Activated B cell treated with CpG ODN at 0.5 μM for 24 hours (primary cell): ENCODE measurements at regions of chr12 and their contacts with region 1.

Region 1: DNA sequence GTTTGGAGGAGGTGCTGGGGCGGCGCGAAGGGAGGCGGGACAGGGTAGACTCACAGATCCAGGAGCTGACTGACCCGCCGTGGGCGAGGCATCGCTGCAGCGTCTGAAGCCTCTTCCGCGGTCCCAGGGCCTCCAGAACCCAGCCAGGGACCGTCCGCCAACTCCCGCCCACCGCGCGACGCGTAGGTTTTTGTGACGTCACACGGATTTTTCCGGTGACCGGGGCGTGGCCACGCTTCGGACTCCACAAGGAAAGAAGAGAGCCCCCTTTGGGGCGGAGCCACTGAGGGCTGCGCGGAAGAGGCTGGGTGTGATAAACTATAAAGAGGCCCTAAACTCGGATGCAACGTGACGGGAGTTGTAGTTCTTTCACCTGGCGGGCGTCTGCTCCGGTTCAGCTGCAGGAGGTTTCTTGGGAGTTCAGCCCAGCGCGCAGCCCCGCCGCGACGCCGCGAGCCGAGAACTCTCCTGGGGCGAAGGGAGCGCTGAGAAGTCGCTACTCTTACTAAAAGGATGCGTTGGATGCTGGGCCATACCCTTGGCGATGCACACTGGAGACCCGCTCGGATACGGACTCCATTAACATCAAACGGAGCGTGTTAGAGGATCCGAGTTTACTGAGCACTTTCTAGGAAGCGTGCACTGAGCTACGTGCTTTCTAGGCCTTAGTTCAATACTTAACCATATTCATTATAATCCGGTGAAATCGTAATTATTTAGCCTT is at the start of gene AMN1:
- DNase-seq: peak; percentile 100
- ATAC-seq: peak; percentile 90
- H3K4me3 Mint-ChIP-seq: peak within 1 kb of the TSS; percentile 92
- H3K27ac Mint-ChIP-seq: peak within 1 kb of the TSS; percentile 98
- H3K4me1 Mint-ChIP-seq: peaks cover 74% of the 10 kb centered on the region
- H3K27me3 Mint-ChIP-seq: no peaks in the 10 kb centered on the region
- CTCF ChIP-seq: no peak
- total RNA-seq, gene AMN1: 13.7 and 15.5 TPM in 2 replicates

Region 2: GRCh38 chr12:31589904-31590641 is 139.0 kb before region 1 on chr12:
- CTCF ChIA-PET with region 1: no interaction called
- POLR2A ChIA-PET with region 1: no interaction called
- intact Hi-C with region 1: loop called (anchors 10 kb)
- DNase-seq: peak; percentile 75
- ATAC-seq: peak; percentile 70
- H3K4me3 Mint-ChIP-seq: peak overlapping the region; percentile 96
- H3K27ac Mint-ChIP-seq: peak overlapping the region; percentile 94
- H3K4me1 Mint-ChIP-seq: peaks cover 60% of the 10 kb centered on the region
- H3K27me3 Mint-ChIP-seq: no peaks in the 10 kb centered on the region
- CTCF ChIP-seq: no peak

Region 3: GRCh38 chr12:31768046-31768445 is 39.0 kb after region 1 on chr12:
- CTCF ChIA-PET with region 1: no interaction called
- POLR2A ChIA-PET with region 1: interaction called, 13 read pairs
- intact Hi-C with region 1: no loop called
- DNase-seq: no peak
- ATAC-seq: no peak
- H3K4me3 Mint-ChIP-seq: no peak overlapping the region
- H3K27ac Mint-ChIP-seq: peak overlapping the region; percentile 35
- H3K4me1 Mint-ChIP-seq: peaks cover 30% of the 10 kb centered on the region
- H3K27me3 Mint-ChIP-seq: no peaks in the 10 kb centered on the region
- CTCF ChIP-seq: no peak

Region 4: DNA sequence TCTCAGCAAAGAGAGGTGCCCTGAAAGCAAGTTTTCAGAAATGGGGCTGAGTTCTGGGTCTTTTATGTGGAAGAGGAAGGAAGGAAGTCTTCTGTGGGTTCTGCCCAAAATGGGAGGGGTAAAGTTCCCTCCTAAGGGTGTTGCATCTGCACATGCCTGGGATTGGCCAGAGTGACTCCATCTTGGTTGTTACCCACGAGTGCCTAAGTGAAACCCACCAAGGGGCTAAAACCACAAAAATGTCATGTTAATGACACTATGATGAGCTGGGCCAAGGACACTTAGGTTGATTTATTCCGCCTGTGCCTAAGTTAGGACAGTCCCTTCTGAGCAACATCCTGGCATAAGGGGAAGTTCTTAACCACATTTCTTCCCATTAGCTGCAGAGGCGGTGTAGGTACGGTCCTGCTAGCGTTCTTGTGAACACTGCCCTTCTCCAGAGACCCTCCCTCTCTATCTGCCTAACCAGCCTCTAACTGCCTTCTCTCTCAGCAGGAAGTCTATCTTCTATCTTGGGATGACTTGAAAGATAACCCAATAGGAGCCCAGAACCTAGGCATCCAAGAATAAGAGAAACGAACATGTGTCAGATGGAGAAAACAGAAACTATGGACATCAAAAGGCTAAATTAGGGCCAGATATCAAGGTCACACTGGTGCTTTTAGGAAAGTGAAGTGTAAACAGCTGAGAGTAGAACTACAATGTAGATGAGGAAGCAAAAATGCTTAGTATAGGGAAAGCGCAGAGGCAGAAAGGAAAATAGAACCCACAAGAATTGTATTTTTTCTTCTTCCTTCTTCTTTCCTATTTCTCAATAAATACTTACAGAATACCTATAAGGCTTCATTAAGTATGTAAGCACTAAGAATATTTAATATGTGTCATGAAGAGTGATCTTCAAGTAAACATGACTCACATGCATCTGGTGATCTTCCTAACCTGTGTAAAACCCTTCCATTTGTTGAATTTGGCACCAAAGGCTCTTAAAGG is 104.0 kb after region 1 on chr12:
- CTCF ChIA-PET with region 1: interaction called, 3 read pairs
- POLR2A ChIA-PET with region 1: interaction called, 24 read pairs
- intact Hi-C with region 1: loop called (anchors 1 kb)
- DNase-seq: peak; percentile 36
- ATAC-seq: peak; percentile 84
- H3K4me3 Mint-ChIP-seq: peak overlapping the region; percentile 59
- H3K27ac Mint-ChIP-seq: peak overlapping the region; percentile 94
- H3K4me1 Mint-ChIP-seq: peaks cover 76% of the 10 kb centered on the region
- H3K27me3 Mint-ChIP-seq: no peaks in the 10 kb centered on the region
- CTCF ChIP-seq: no peak

Region 5: GRCh38 chr12:31896514-31897039 is 167.5 kb after region 1 on chr12:
- CTCF ChIA-PET with region 1: no interaction called
- POLR2A ChIA-PET with region 1: interaction called, 45 read pairs
- intact Hi-C with region 1: loop called (anchors 1 kb)
- DNase-seq: peak; percentile 58
- ATAC-seq: peak; percentile 93
- H3K4me3 Mint-ChIP-seq: peak overlapping the region; percentile 73
- H3K27ac Mint-ChIP-seq: peak overlapping the region; percentile 96
- H3K4me1 Mint-ChIP-seq: peaks cover 69% of the 10 kb centered on the region
- H3K27me3 Mint-ChIP-seq: no peaks in the 10 kb centered on the region
- CTCF ChIP-seq: no peak

Region 6: GRCh38 chr12:32181498-32182175 is 452.6 kb after region 1 on chr12:
- CTCF ChIA-PET with region 1: no interaction called
- POLR2A ChIA-PET with region 1: no interaction called
- intact Hi-C with region 1: no loop called
- DNase-seq: no peak
- ATAC-seq: no peak
- H3K4me3 Mint-ChIP-seq: no peak overlapping the region
- H3K27ac Mint-ChIP-seq: no peak overlapping the region
- H3K4me1 Mint-ChIP-seq: peaks cover 2% of the 10 kb centered on the region
- H3K27me3 Mint-ChIP-seq: no peaks in the 10 kb centered on the region
- CTCF ChIP-seq: no peak